ENCODE measurements at regions of chr17 and their contacts with region 1.

Region 1: DNA sequence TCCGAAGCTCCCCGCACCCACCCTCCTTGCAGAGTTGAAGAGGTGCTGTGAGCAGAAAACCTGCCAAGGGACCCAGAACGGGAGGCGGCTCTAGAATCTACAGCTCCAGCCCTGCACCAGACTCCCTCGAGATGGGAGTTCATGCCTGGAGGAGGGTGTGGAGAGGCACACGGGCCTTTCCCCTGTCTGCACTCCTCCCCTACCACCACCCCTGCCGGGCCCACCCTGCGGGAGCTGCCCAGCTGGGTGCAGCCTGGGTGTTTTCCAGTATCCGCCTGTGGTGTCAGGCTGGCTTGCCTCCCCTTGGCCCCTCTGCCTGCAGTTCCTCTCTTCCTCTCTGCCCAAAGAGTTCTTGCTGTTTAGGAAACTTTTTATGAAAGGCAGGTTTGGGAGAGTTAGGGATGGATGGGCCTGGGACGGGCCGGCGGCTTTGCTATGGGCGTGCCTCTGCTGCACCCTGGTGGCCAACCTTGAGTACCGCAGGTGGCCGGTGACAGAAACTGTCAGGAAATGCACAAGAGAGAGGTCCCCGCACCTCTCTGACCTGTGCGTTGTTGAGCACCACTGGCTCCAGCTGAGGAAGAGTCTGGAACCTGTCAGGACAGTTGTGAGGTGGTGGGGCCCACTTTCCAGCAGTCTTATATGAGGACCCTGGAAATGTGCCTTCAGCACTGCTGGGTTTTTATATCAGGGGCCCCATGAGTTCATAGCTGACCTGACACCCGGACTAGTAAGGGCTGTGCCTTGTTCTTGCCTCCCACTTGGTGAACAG is 354.1 kb downstream of the SEC14L1 start:
- DNase-seq: peak; percentile 64 to 84 (median 79)
- H3K4me3 ChIP-seq: no peak overlapping the region
- H3K27ac ChIP-seq: peak overlapping the region in 2 of 59 donors; percentile 5 to 18
- H3K27me3 ChIP-seq: no peaks in the 10 kb centered on the region
- CTCF ChIP-seq: peak; percentile 90 to 100 (median 99)

Region 2: DNA sequence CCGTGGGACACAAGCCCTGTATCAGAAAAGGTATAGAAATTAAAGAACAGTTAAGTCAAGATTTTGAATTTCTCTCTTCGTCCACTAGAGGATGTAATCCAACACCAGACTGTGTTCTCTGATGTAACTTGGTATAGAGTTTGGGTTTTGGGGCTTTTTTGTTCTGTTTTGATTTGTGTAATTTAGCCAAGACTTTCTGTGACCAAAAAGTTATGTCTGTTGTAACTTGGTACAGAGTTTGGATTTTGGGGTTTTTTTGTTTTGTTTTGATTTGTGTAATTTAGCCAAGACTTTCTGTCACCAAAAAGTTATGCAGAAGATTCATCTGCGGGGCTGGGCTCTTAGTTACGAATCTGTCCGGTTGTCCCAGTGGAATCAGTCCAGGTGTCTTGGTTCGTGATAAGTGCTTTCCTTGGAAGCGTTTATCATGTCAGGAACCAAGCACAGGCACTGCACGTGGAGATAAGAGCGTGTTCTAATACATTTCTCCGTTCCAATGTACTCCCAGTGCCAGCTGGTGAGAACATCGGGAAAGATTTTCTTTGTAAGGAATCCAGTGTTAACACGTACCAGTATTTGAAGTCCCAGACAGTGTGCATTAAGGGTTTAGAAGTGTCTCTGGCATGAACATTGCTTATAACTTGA is 398.2 kb before region 1 on chr17:
- intact Hi-C with region 1: loop called in 1 of 2 experiments (anchors 10 kb)
- DNase-seq: no peak
- H3K4me3 ChIP-seq: peak overlapping the region in 6 of 59 donors; percentile 0 to 20 (median 6)
- H3K27ac ChIP-seq: peak overlapping the region; percentile 52 to 100 (median 97)
- H3K27me3 ChIP-seq: no peaks in the 10 kb centered on the region
- CTCF ChIP-seq: peak; percentile 68 to 95 (median 85)

Region 3: GRCh38 chr17:77266891-77267341 is 227.9 kb before region 1 on chr17:
- intact Hi-C with region 1: no loop called
- DNase-seq: no peak
- H3K4me3 ChIP-seq: no peak overlapping the region
- H3K27ac ChIP-seq: no peak overlapping the region
- H3K27me3 ChIP-seq: no peaks in the 10 kb centered on the region
- CTCF ChIP-seq: no peak

Region 4: DNA sequence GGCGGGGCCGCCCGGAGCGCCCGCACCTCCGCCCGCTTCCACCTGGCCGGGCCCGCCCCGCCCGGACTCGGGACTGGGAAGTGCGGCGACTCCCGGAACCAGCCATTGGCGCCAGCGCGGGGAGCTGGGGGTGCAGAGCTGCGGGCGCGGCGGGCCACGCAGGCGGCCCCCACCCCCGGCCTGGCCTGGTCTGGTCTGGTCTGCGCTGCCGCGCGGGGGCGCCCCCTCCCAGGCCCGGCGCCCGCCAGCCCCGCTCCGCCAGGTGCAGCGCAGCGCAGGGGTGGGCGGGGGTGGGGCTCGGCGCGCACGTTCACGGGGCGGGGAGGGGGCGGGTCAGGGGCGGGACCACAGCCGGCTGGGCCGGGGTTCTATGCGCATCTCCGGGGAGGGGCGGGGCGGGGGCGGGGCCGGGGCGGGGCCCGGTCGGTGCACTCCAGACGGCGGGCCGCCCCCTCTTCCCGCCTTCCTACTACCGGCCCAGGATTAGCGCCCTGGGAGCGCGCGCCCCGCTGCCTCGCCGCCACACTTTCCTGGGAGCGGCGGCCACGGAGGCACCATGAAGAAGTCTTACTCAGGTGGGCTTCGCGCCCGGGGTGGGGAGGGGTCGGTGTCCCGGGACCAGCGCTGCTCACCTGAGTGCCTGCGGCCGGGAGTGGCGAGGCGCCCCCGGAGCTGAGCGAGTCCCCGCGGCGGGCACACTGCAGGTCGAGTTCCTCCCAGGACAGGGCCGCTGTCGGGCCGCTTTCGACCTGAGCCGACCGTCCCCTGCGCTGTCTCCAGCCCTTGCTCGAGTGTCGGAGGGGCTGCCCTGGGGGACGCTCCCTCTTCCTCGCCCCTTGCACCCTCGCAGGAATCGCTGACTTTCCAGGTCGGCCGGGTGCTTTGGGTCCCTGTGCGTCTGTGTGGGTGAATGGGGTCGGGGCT is 213.6 kb before region 1 on chr17:
- intact Hi-C with region 1: no loop called
- DNase-seq: peak in 3 of 10 donors; percentile 30 to 73 (median 54)
- H3K4me3 ChIP-seq: peak overlapping the region; percentile 26 to 69 (median 57)
- H3K27ac ChIP-seq: peak overlapping the region in 1 of 59 donors; percentile 52
- H3K27me3 ChIP-seq: peaks cover 0 to 17% (median 3%) of the 10 kb centered on the region in 45 donors
- CTCF ChIP-seq: peak in 12 of 56 donors; percentile 11 to 57 (median 18)

Region 5: GRCh38 chr17:77331301-77331864 is 163.5 kb before region 1 on chr17:
- intact Hi-C with region 1: loop called (anchors 1 to 2 kb)
- DNase-seq: peak; percentile 82 to 94 (median 90)
- H3K4me3 ChIP-seq: peak overlapping the region in 39 of 59 donors; percentile 4 to 62 (median 38)
- H3K27ac ChIP-seq: peak overlapping the region in 27 of 59 donors; percentile 3 to 74 (median 52)
- H3K27me3 ChIP-seq: no peaks in the 10 kb centered on the region
- CTCF ChIP-seq: peak; percentile 92 to 99 (median 98)

Region 6: GRCh38 chr17:77429919-77430752 is 64.7 kb before region 1 on chr17:
- intact Hi-C with region 1: loop called (anchors 1 to 2 kb)
- DNase-seq: peak; percentile 72 to 85 (median 79)
- H3K4me3 ChIP-seq: no peak overlapping the region
- H3K27ac ChIP-seq: peak overlapping the region in 42 of 59 donors; percentile 3 to 88 (median 52)
- H3K27me3 ChIP-seq: no peaks in the 10 kb centered on the region
- CTCF ChIP-seq: peak; percentile 43 to 94 (median 82)

Region 7: GRCh38 chr17:77451245-77451893 is 43.5 kb before region 1 on chr17:
- intact Hi-C with region 1: loop called in 1 of 2 experiments (anchors 2 kb)
- DNase-seq: peak; percentile 69 to 93 (median 88)
- H3K4me3 ChIP-seq: peak overlapping the region; percentile 42 to 87 (median 67)
- H3K27ac ChIP-seq: peak overlapping the region; percentile 85 to 99 (median 97)
- H3K27me3 ChIP-seq: no peaks in the 10 kb centered on the region
- CTCF ChIP-seq: peak in 8 of 56 donors; percentile 0 to 37 (median 10)

Region 8: GRCh38 chr17:77476931-77477877 is 17.6 kb before region 1 on chr17:
- intact Hi-C with region 1: no loop called
- DNase-seq: peak in 8 of 10 donors; percentile 51 to 80 (median 70)
- H3K4me3 ChIP-seq: peak overlapping the region in 10 of 59 donors; percentile 0 to 36 (median 20)
- H3K27ac ChIP-seq: peak overlapping the region in 42 of 59 donors; percentile 6 to 81 (median 54)
- H3K27me3 ChIP-seq: no peaks in the 10 kb centered on the region
- CTCF ChIP-seq: no peak